Activated naive CD4-positive, alpha-beta T cell treated with anti-CD3 and anti-CD28 coated beads for 36 hours (primary cell): ENCODE measurements at regions of chr16 and their contacts with region 1.

Region 1: GRCh38 chr16:17467923-17468540 is 2.7 kb downstream of the XYLT1 start:
- DNase-seq: peak; percentile 80
- H3K4me3 Mint-ChIP-seq: peak overlapping the region; percentile 10
- H3K27ac Mint-ChIP-seq: no peak overlapping the region
- H3K4me1 Mint-ChIP-seq: peaks cover 42% of the 10 kb centered on the region
- H3K27me3 Mint-ChIP-seq: peaks cover 2% of the 10 kb centered on the region

Region 2: DNA sequence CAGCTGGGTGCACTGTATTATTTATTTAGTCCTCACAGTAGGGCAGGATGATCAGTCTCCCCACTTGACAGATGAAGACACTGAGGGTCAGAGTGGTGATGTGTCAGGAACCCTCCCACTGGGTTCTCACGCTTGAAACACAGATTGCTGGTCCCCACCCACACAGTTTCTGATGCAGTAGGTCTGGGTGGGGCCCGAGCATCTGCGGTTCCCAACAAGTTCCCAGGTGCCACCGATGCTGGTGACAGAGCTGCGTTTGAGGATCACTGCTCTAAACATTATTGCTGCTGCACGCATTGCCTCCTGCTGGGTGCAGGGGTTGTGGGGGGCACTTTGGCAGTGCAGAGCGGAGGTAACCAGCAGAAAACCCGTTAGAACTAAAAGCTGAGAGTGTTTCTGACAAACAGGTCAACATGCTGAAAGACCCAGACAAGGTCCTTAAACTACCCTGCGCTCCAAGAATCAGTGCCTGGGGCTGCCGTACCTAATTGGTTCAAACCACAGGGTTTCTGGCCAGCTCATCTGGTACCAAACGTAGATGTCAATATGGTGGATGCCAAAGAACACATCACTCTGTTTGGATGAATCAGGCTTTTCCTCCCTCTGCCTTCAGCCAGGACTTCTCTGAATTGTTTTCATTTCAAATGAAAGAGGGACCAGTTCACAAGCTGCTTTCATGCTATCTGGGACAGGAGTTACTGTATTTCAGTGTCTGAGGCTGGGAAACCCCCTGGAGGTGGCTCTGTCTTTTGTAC is 1442.6 kb before region 1 on chr16:
- CTCF ChIA-PET with region 1: no interaction called
- intact Hi-C with region 1: loop called (anchors 5 kb)
- DNase-seq: peak; percentile 69
- H3K4me3 Mint-ChIP-seq: no peak overlapping the region
- H3K27ac Mint-ChIP-seq: peak overlapping the region; percentile 79
- H3K4me1 Mint-ChIP-seq: peaks cover 30% of the 10 kb centered on the region
- H3K27me3 Mint-ChIP-seq: no peaks in the 10 kb centered on the region

Region 3: DNA sequence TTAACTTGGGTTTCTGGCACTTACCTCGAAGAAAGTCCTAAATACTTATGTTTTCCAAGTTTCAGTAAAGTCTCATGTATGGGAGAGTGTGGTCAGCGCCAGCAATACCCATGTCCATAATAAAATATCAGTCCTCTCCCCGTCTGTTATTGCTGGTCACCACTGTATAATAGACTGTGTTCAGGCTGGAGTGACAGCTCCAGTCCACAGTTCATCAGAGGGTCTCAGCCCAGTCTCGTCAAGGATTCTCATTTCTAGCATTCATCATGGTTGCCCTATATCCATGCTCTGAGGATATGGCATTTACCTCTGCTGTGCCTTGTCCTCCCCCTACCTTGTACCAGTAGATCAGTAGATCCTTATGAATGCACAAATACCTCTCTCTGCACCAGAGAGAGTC is 704.6 kb before region 1 on chr16:
- CTCF ChIA-PET with region 1: no interaction called
- intact Hi-C with region 1: no loop called
- DNase-seq: no peak
- H3K4me3 Mint-ChIP-seq: no peak overlapping the region
- H3K27ac Mint-ChIP-seq: no peak overlapping the region
- H3K4me1 Mint-ChIP-seq: no peaks in the 10 kb centered on the region
- H3K27me3 Mint-ChIP-seq: peaks cover 5% of the 10 kb centered on the region

Region 4: DNA sequence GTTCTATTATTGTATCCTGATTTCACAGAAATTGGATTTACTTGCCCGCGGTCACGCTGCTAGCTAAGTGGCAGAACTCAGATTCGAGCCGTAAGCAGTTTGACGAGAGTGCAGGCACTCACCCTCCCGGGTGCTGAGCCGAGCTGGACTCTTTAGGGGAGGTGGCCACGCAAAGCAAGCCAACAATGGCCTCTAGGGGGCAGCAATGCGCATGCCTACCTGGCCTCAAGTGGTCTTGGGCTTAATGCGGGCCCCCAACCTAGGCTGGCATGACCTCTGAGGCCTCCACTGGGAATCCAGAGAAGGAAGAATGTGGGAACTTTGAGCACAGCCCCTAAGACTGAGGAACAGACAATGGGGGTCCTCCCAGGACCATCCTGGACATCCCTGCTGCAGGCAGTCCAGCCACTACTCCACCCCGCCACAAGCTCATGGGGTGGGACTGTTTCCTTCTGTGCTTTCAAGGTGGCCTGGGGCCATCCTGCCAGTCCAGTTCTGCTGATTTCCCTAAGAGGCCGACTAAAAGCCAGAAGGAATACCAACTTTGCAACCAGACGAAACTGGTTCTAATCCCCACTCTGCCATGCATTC is 273.7 kb before region 1 on chr16:
- CTCF ChIA-PET with region 1: interaction called, 14 read pairs
- intact Hi-C with region 1: loop called (anchors 2 kb)
- DNase-seq: peak; percentile 72
- H3K4me3 Mint-ChIP-seq: no peak overlapping the region
- H3K27ac Mint-ChIP-seq: no peak overlapping the region
- H3K4me1 Mint-ChIP-seq: no peaks in the 10 kb centered on the region
- H3K27me3 Mint-ChIP-seq: no peaks in the 10 kb centered on the region

Region 5: GRCh38 chr16:17277977-17278381 is 190.1 kb before region 1 on chr16:
- CTCF ChIA-PET with region 1: interaction called, 3 read pairs
- intact Hi-C with region 1: loop called (anchors 2 kb)
- DNase-seq: peak; percentile 25
- H3K4me3 Mint-ChIP-seq: no peak overlapping the region
- H3K27ac Mint-ChIP-seq: no peak overlapping the region
- H3K4me1 Mint-ChIP-seq: peaks cover 32% of the 10 kb centered on the region
- H3K27me3 Mint-ChIP-seq: no peaks in the 10 kb centered on the region

Region 6: DNA sequence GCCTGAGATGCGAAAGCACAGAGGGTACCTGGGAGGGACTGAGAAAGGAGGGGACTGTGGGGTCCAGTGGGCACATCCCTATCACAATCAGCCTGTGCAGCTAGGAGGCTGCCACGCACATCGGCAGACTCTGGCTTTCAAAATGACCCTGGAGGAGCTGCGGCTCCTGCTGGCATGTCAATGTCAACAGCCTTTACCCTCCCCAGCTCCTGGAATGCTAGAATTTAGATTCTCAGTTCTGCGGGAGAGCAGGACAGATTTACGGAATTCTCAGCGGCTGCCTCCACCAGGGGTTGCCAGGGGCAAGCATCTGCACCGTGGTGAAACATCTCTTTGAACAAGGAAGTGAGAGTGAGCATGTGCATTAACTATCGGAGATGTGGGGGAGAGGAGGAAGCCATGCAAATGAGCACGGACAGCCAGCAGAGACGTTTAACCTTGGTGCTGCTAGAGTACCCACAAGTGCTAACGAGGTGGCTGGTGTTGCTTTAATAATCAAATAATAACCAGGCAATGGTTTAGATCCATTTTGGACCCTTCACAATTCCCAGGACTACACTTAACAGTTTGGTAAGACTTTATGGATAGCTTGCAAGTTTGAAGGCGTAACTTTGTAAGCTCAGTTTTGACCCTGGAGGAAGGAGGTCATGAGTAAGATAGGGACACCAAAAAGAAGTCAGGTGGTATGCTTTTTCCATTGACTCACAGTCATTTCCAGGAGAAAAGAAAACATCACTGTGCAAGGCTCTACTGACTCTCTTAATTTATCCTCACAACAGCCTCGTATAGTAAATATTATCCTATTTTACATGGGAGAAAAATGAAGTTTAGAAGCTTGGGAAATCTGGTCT is 51.3 kb before region 1 on chr16:
- CTCF ChIA-PET with region 1: interaction called, 30 read pairs
- intact Hi-C with region 1: loop called (anchors 1 kb)
- DNase-seq: peak; percentile 72
- H3K4me3 Mint-ChIP-seq: peak overlapping the region; percentile 76
- H3K27ac Mint-ChIP-seq: peak overlapping the region; percentile 86
- H3K4me1 Mint-ChIP-seq: peaks cover 39% of the 10 kb centered on the region
- H3K27me3 Mint-ChIP-seq: no peaks in the 10 kb centered on the region